ENCODE measurements at regions of chr10 and their contacts with region 1.

Region 1: GRCh38 chr10:25288181-25288580 is 113.4 kb downstream of the GPR158 start:
- DNase-seq: no peak
- ATAC-seq: no peak
- H3K4me3 ChIP-seq: no peak overlapping the region
- H3K27ac ChIP-seq: no peak overlapping the region
- H3K4me1 ChIP-seq: no peaks in the 10 kb centered on the region
- H3K27me3 ChIP-seq: peaks cover 0 to 3% (median 1%) of the 10 kb centered on the region in 4 donors
- CTCF ChIP-seq: no peak

Region 2: DNA sequence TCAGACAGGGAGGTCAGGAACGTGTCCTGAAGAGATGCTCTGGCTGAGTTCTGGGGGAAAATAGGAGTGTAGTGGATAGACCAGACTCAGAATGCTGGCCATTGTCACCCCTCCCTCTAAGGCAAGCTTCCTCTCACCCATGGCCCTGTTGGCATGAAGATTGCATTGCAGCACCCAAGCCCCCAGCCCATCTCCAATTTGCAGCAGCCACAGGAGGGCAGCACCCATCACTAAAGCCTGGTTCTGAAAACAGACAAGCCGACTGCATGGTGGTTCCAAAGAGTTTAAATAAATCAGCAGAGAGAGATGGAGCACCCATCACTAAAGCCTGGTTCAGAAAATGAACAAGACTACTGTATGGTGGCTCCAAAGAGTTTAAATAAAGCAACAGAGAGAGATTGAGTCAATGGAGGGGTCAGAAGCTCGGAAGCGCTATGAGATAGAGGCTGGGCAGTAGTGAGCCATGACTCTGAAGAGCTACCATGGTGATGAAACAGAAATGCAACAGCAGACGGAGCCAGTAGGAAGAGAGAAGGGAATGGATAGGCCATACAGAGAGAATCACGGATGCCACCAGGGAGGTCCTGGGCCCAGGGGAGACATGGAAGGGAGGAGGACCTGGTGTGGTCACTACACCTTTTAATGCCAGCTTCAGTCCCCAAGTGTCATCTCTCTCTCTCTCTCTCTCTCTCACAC is 408.0 kb after region 1 on chr10:
- intact Hi-C with region 1: loop called in 1 of 3 experiments (anchors 10 kb)
- DNase-seq: no peak
- ATAC-seq: no peak
- H3K4me3 ChIP-seq: no peak overlapping the region
- H3K27ac ChIP-seq: no peak overlapping the region
- H3K4me1 ChIP-seq: no peaks in the 10 kb centered on the region
- H3K27me3 ChIP-seq: no peaks in the 10 kb centered on the region
- CTCF ChIP-seq: no peak